PC-9 (cell line): ENCODE measurements at regions of chr7 and their contacts with region 1.

Region 1: DNA sequence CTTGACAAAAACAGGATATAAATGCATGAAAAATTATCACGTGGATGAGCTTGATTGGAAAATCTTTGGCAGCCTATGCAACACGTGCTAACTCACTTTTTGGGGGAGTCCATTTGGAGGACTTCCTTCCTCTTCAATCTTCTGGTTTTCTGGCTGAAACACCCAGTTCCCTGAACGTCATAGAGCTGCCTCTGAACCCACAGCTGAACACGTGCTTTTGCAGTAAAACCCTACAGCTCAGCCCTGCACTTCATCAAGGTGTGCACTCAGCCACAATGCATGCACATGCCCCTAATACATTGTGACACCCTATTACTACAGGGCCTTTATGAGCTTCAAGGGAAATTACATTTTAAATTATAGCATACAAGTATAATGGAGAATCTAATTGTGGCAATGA is 808.7 kb upstream of the AUTS2 start:
- DNase-seq: no peak
- H3K4me3 ChIP-seq: no peak overlapping the region
- H3K27ac ChIP-seq: no peak overlapping the region
- H3K4me1 ChIP-seq: peaks cover 7% of the 10 kb centered on the region; the same call in 1 of the 2 replicates
- H3K27me3 ChIP-seq: no peaks in the 10 kb centered on the region
- CTCF ChIP-seq: no peak

Region 2: GRCh38 chr7:69047151-69047754 is 257.7 kb after region 1 on chr7:
- CTCF ChIA-PET with region 1: interaction called, 10 read pairs
- POLR2A ChIA-PET with region 1: no interaction called
- intact Hi-C with region 1: no loop called
- DNase-seq: no peak
- H3K4me3 ChIP-seq: no peak overlapping the region
- H3K27ac ChIP-seq: no peak overlapping the region
- H3K4me1 ChIP-seq: no peaks in the 10 kb centered on the region
- H3K27me3 ChIP-seq: no peaks in the 10 kb centered on the region
- CTCF ChIP-seq: no peak

Region 3: GRCh38 chr7:69272101-69272500 is 482.5 kb after region 1 on chr7:
- CTCF ChIA-PET with region 1: no interaction called
- POLR2A ChIA-PET with region 1: no interaction called
- intact Hi-C with region 1: no loop called
- DNase-seq: no peak
- H3K4me3 ChIP-seq: no peak overlapping the region
- H3K27ac ChIP-seq: no peak overlapping the region
- H3K4me1 ChIP-seq: no peaks in the 10 kb centered on the region
- H3K27me3 ChIP-seq: no peaks in the 10 kb centered on the region
- CTCF ChIP-seq: no peak